Activated CD4-positive, alpha-beta T cell treated with anti-CD3 and anti-CD28 coated beads for 36 hours (primary cell): ENCODE measurements at regions of chr6 and their contacts with region 1.

Region 1: DNA sequence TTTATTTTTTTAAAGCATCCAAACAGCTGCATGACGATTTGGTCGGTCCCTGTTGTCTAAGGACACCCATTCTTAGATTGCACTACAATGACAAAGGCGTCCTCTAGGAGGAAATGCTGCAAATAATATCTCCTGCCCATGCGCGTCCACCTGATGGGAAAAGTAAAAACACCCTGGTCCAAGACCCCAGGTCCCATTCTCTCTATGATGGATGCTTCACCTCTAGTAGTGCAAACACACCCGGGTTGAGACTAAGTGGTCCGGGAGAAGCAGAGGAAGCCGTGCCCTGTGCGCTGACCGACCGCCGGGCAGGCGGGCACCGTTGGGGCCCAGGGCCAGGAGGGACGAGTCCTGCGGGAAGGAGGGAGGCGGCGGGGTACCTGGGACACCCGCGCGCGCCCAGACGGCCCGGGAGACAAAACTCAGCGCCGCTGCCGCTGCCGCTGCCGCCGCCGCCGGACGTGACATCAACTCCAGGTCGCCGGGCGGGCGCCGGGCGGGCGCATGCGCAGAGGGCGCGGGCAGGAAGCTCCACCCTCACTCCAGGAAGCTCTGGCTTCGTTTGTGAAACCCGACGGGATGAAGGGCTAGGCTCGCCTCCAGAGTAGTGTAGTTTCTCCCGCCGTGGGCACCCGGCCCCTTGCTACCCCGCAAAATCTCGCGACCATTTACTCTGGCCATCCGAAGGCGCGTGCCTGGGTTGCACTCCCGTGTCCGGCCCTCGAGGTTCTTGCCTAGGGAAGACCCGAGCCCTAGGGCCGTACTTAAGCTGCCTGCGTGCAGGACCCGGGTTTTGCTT is at the start of gene TBC1D7:
- DNase-seq: peak; percentile 96
- ATAC-seq: peak; percentile 91
- H3K4me3 Mint-ChIP-seq: peak within 1 kb of the TSS; percentile 88
- H3K27ac Mint-ChIP-seq: peak within 1 kb of the TSS; percentile 95
- H3K4me1 Mint-ChIP-seq: peaks cover 17% of the 10 kb centered on the region
- H3K27me3 Mint-ChIP-seq: no peaks in the 10 kb centered on the region
- total RNA-seq, gene TBC1D7: 13.8 to 16.4 TPM

Region 2: GRCh38 chr6:12911387-12911960 is 416.8 kb before region 1 on chr6:
- CTCF ChIA-PET with region 1: interaction called, 16 read pairs
- POLR2A ChIA-PET with region 1: no interaction called
- intact Hi-C with region 1: loop called (anchors 1 to 2 kb)
- DNase-seq: no peak
- ATAC-seq: no peak
- H3K4me3 Mint-ChIP-seq: no peak overlapping the region
- H3K27ac Mint-ChIP-seq: no peak overlapping the region
- H3K4me1 Mint-ChIP-seq: no peaks in the 10 kb centered on the region
- H3K27me3 Mint-ChIP-seq: peaks cover 8% of the 10 kb centered on the region

Region 3: GRCh38 chr6:13272131-13273046 is 55.9 kb before region 1 on chr6:
- CTCF ChIA-PET with region 1: interaction called, 4 read pairs
- POLR2A ChIA-PET with region 1: no interaction called
- intact Hi-C with region 1: loop called in 1 of 2 experiments (anchors 2 kb)
- DNase-seq: no peak
- ATAC-seq: no peak
- H3K4me3 Mint-ChIP-seq: no peak overlapping the region
- H3K27ac Mint-ChIP-seq: no peak overlapping the region
- H3K4me1 Mint-ChIP-seq: peaks cover 21% of the 10 kb centered on the region
- H3K27me3 Mint-ChIP-seq: peaks cover 4% of the 10 kb centered on the region

Region 4: DNA sequence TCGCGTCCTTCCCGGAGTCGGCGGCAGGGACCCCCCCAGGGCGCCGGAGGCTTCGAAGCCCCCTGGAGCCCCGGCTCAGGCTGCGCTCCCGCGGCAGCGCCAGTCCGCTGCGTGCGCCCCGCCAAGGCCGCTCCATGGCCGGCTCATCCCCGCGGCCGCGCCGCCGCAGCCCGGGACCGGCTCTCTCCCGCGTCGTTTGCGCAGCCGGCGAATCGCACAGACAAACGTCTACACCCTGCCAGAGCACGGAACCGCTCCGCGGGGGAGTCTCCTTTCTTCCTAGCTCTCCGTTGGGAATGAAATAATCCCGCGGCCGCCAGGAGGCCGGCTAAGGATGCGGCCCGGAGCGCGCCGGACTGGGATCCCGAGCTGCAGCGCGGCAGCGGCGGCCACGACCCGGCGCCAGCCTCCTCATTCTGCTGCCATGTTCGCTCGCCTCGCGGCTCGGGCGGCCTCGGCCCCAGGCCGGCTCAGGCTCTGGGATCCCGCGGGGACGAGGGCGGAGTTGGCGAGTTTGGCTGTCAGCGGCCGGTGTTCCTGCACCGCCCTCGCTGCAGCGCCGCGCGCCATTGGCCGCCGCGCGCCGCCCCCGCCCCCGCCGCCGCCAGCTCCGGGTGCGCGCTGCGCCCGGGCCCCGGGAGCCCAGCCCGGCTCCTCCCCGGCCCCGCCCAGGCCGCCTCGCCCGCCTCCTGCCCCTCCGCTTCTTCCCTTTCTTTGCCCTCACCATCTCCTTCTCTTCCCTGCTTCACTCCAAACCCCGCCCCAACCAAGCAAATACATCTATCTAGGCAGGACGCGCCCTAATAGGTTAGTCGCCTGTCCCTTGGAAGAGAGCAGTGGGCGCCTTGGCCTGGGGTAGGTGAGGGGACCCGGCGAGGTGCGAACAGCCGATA is 159.1 kb after region 1 on chr6 and contains the start of gene GFOD1:
- CTCF ChIA-PET with region 1: interaction called, 6 read pairs
- POLR2A ChIA-PET with region 1: no interaction called
- intact Hi-C with region 1: loop called in 1 of 2 experiments (anchors 1 kb)
- DNase-seq: peak; percentile 87
- ATAC-seq: peak; percentile 83
- H3K4me3 Mint-ChIP-seq: peak within 1 kb of the TSS; percentile 83
- H3K27ac Mint-ChIP-seq: peak within 1 kb of the TSS; percentile 74
- H3K4me1 Mint-ChIP-seq: peaks cover 36% of the 10 kb centered on the region
- H3K27me3 Mint-ChIP-seq: peaks cover 8% of the 10 kb centered on the region
- total RNA-seq, gene GFOD1: 4.2 to 5.8 TPM

Region 5: DNA sequence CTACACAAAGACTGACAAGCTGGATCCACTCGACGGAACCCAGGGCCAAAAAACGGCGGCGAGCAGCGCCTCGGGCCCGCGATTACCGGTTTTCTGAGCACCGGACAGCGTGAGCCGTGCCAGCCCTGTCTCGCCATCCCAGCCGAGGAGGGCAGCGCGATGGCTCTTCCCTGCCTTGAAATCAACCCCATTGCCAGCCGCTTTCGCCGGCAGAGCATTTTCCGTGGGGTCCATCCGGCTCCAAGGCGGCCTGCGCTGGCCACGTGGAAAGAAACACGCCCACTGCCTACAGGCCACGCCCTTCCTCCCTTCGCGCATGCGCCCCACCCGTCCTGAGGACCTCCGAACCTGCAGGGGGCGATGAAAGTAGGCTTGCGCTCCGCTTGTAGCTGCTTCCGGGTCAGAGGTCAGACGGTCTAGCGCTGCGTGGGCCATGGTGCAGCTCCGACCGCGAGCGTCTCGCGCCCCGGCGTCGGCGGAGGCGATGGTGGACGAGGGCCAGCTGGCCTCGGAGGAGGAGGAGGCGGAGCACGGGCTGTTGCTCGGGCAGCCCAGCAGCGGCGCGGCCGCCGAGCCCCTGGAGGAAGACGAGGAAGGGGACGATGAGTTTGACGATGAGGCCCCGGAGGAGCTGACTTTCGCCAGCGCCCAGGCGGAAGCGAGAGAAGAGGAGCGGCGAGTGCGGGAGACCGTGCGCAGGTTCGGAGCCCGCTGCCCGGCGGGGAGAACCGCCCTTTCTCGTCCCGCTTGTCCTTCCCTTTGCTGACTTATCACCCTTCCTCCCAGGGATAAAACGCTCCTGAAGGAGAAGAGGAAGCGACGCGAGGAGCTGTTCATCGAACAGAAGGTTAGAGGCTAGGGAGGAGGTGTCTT is 286.9 kb after region 1 on chr6 and contains the start of gene NOL7:
- CTCF ChIA-PET with region 1: interaction called, 8 read pairs
- POLR2A ChIA-PET with region 1: interaction called, 7 read pairs
- intact Hi-C with region 1: loop called in 1 of 2 experiments (anchors 1 kb)
- DNase-seq: peak; percentile 99
- ATAC-seq: peak; percentile 92
- H3K4me3 Mint-ChIP-seq: peak within 1 kb of the TSS; percentile 92
- H3K27ac Mint-ChIP-seq: peak within 1 kb of the TSS; percentile 90
- H3K4me1 Mint-ChIP-seq: peaks cover 44% of the 10 kb centered on the region
- H3K27me3 Mint-ChIP-seq: no peaks in the 10 kb centered on the region
- total RNA-seq, gene NOL7: 92.8 to 97.3 TPM